ENCODE measurements at regions of chr1 and their contacts with region 1.

Region 1: DNA sequence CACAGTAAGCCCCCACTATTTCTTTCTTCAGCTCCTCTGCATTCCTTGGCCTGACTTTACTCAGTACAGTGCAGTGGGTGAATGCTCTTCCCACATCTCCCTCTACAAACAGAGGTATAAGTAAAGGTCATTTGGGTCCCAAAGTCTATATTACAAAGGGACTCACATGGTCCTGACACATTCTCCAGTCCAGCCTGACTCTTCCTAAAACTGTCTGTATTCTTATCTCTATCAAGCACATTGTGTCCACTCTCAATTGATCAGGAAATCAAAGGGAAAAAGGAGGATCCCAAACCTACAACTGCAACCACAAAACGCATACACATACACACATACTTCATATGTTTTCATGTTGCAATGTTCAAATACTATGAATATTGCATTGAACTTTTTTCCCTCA is 49.4 kb downstream of the FRRS1 start:
- DNase-seq: no peak
- H3K4me3 ChIP-seq: no peak overlapping the region
- H3K27ac ChIP-seq: no peak overlapping the region
- H3K4me1 ChIP-seq: no peaks in the 10 kb centered on the region
- H3K27me3 ChIP-seq: no peaks in the 10 kb centered on the region
- CTCF ChIP-seq: no peak
- POLR2A ChIP-seq: no peak

Region 2: GRCh38 chr1:99177465-99177864 is 539.5 kb before region 1 on chr1:
- intact Hi-C with region 1: loop called (anchors 5 kb)
- DNase-seq: no peak
- H3K4me3 ChIP-seq: no peak overlapping the region
- H3K27ac ChIP-seq: no peak overlapping the region
- H3K4me1 ChIP-seq: peaks cover 4% of the 10 kb centered on the region
- H3K27me3 ChIP-seq: no peaks in the 10 kb centered on the region
- CTCF ChIP-seq: no peak
- POLR2A ChIP-seq: no peak

Region 3: GRCh38 chr1:99820546-99820945 is 103.5 kb after region 1 on chr1:
- intact Hi-C with region 1: no loop called
- DNase-seq: no peak
- H3K4me3 ChIP-seq: no peak overlapping the region
- H3K27ac ChIP-seq: no peak overlapping the region
- H3K4me1 ChIP-seq: no peaks in the 10 kb centered on the region
- H3K27me3 ChIP-seq: no peaks in the 10 kb centered on the region
- CTCF ChIP-seq: no peak
- POLR2A ChIP-seq: no peak

Region 4: DNA sequence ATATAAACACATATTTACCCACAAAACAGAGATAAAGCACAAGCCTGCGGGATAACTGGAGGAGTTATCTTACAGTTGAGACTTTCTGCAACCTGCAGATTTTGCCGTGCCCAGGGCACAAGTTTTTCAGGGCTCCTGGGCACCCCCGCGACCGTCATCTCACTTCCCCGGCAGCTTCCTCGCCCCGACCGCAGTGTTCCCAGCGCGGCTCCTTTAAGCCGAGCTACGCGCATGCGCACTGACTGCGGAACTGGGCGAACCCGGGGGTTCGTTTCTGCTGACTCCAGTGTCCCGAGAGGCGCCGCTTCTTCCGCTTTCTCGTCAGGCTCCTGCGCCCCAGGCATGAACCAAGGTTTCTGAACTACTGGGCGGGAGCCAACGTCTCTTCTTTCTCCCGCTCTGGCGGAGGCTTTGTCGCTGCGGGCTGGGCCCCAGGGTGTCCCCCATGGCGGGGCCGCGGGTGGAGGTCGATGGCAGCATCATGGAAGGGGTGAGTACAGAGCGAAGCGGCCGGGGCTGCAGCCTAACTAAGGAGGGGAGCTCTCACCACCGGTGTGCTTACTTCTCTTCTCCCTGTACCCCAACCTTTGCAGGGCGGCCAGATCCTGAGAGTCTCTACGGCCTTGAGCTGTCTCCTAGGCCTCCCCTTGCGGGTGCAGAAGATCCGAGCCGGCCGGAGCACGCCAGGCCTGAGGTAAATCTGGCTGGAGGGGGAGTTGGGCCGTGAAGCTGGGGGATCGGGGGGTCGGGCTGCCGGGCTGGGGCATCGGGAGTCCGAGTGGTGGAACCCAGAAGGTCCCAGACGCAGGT is 549.1 kb after region 1 on chr1 and contains the start of gene RTCA:
- intact Hi-C with region 1: no loop called
- DNase-seq: peak; percentile 97
- H3K4me3 ChIP-seq: peak within 1 kb of the TSS; percentile 89 to 95
- H3K27ac ChIP-seq: peak within 1 kb of the TSS; percentile 72 to 83
- H3K4me1 ChIP-seq: peaks cover 7% of the 10 kb centered on the region
- H3K27me3 ChIP-seq: no peaks in the 10 kb centered on the region
- CTCF ChIP-seq: no peak
- POLR2A ChIP-seq: no peak
- total RNA-seq, gene RTCA: 24.2 to 30.0 TPM

Measured in testis (tissue), 5 donors.